ENCODE measurements at regions of chr6 and their contacts with region 1.

Region 1: GRCh38 chr6:147642458-147642857 is 134.0 kb downstream of the SAMD5 start:
- DNase-seq: peak; percentile 65 to 66
- H3K4me3 ChIP-seq: no peak overlapping the region
- H3K4me3 Mint-ChIP-seq: peak overlapping the region; percentile 40
- H3K27ac Mint-ChIP-seq: peak overlapping the region; percentile 89
- H3K4me1 ChIP-seq: peaks cover 25% of the 10 kb centered on the region
- H3K4me1 Mint-ChIP-seq: peaks cover 31% of the 10 kb centered on the region
- H3K27me3 ChIP-seq: no peaks in the 10 kb centered on the region
- H3K27me3 Mint-ChIP-seq: no peaks in the 10 kb centered on the region
- CTCF ChIP-seq: no peak

Region 2: DNA sequence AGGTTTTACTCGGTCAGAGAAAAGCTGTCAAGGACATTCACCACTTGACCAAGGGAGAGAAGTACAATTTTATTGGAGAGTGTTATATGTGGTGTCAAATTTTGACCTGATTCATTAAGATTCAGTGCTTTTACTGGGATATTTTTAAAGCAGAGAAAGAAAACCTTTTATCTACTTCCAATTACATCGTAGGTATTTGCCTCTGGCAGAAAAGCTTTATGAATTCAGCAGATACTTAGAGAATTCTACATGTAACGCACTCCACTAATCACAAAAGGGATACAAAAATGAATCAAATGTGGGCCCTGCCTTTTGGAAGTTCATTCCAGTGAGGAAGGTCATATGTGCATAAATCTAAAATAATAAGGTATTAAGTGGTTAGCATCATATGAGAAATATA is 304.5 kb before region 1 on chr6:
- CTCF ChIA-PET with region 1: no interaction called
- POLR2A ChIA-PET with region 1: no interaction called
- intact Hi-C with region 1: no loop called
- DNase-seq: no peak
- H3K4me3 ChIP-seq: no peak overlapping the region
- H3K4me3 Mint-ChIP-seq: no peak overlapping the region
- H3K27ac Mint-ChIP-seq: no peak overlapping the region
- H3K4me1 ChIP-seq: no peaks in the 10 kb centered on the region
- H3K4me1 Mint-ChIP-seq: no peaks in the 10 kb centered on the region
- H3K27me3 ChIP-seq: no peaks in the 10 kb centered on the region
- H3K27me3 Mint-ChIP-seq: no peaks in the 10 kb centered on the region
- CTCF ChIP-seq: no peak

Region 3: DNA sequence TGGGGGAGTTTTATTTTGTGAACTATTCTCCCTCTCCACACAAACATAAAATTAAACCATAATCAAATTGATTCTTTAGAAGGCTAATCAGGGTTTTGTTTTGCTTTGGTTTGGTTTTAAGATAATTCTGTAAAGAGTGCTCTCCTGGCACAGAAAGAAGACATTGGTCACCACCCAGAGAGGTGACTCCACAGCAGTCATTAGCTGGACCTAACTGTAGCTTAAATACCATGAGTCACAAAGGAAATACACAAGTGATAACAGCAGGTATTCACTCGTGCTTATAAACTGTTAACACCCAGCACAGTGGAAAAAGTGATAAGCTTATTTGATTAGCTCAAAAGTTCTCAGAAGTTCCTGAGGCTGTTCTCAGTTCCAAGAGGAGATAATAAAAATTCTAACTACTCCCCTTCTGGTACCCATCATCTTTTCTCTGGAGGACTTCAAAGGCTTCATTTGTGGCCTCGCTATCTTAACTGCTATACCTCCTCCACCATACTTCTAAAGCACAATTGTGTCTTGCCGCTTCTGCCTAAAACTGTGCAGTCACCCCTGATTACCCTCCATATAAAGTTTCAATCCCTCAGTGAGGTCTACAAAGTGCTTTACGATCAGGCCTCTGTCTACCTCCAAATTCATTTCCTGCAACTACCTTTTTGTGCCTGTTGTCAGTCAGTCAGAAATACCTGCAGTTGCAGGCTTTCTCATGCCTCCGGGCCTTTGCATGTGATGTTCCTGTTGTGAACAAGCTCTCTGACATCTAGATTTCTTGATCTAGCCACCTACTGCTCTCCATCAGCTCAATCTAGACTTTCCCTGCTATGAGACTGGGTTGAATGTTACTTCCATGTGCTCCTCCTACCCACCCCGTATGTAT is 67.2 kb after region 1 on chr6:
- CTCF ChIA-PET with region 1: no interaction called
- POLR2A ChIA-PET with region 1: no interaction called
- intact Hi-C with region 1: loop called (anchors 1 kb)
- DNase-seq: peak; percentile 46 to 65
- H3K4me3 ChIP-seq: no peak overlapping the region
- H3K4me3 Mint-ChIP-seq: peak overlapping the region; percentile 3
- H3K27ac Mint-ChIP-seq: peak overlapping the region; percentile 50
- H3K4me1 ChIP-seq: peaks cover 44% of the 10 kb centered on the region
- H3K4me1 Mint-ChIP-seq: peaks cover 37% of the 10 kb centered on the region
- H3K27me3 ChIP-seq: no peaks in the 10 kb centered on the region
- H3K27me3 Mint-ChIP-seq: no peaks in the 10 kb centered on the region
- CTCF ChIP-seq: no peak

Measured in Caco-2 (cell line).